AG04450 (cell line): ENCODE measurements at regions of chr2 and their contacts with region 1.

Region 1: DNA sequence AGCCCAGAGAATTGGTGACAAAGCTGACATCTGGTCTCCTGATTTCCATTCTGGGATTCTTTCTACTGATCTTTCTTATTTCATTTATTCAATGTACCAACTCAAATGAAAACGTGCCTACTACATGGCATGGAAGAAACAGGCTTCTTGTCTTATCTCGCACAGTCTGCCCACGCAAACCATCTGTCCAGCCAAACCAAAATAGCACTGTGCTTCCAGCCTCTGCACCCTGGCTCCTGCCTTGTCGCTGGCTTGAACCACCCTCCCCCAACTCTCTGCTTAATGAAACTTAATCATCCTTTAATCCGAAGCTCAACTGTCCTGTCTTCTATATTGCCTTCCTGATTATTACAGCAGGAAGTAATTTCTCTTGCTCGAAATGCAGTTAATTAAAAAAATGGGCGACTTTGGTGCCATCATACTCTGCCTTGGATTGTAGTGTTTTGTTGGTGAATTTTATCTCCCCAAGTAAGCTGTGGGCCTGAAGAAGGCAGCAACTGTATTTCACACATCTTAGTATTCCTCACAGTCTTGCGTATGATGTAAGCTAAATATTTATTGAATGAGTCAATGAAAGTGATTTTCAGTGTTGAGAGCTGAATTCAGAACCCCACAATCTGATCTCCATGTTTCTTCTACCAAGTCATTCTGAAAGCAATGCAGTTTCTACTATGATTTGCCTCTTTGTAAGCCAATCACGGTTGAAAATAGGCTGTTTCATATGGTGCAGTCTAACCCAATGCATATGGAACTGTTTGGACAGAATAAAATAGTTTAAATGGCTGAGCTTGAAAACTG is 190.8 kb downstream of the TMEM247 start:
- DNase-seq: no peak
- H3K4me3 ChIP-seq: no peak overlapping the region
- H3K27ac ChIP-seq: no peak overlapping the region
- H3K27me3 ChIP-seq: no peaks in the 10 kb centered on the region
- CTCF ChIP-seq: no peak

Region 2: DNA sequence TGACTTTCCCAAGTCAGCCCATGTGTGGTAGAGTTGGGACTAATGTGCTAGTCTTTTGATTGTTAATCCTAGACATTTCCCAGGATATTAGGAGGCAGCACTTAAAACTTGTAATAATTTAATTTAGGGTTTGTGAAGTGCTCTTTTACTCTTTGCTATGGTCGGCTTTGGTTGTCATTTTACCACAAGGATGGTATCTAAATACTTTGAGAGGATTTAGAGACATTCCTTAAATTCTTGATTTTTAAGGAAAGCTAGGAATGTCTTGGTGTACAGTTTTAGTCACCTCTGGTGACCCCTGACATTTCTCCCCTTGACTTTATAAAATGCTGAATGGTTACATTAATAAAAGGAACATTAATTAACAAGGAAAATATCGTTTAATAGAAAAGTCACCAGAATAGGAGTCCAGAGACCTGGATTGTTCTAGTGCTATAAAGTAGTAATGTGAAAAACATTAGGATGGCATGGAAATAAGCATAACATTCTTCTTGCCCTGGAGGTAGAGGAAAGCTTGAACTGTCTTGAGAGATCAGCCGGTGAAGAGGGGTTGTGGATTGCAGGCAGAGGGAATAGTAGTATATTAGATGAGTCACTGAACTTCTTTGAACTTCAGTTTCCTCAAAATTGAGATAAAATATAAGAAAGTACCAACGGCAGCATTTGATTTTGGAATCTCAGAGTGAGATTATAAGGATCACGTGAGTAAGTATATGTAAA is 36.2 kb after region 1 on chr2:
- CTCF ChIA-PET with region 1: no interaction called
- POLR2A ChIA-PET with region 1: no interaction called
- DNase-seq: no peak
- H3K4me3 ChIP-seq: no peak overlapping the region
- H3K27ac ChIP-seq: no peak overlapping the region
- H3K27me3 ChIP-seq: no peaks in the 10 kb centered on the region
- CTCF ChIP-seq: no peak

Region 3: DNA sequence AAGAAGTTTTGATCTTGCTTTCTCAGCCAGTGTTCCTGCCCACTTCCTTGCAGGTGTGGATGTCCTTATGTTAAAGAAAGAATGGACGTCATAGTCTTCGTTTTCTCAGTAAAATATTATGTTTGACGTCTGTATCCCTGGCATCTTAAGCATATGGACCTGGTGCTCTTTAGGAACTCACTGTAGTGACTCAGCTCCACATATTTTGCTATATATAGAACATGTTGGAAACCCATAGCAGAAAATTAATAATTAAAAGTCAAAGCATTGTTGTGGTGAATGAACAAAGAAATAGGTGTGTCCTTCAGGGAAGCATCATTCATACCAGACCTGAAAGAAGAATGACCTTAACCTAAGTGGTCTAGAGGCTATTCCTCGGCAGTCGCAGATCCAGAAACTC is 49.3 kb after region 1 on chr2:
- CTCF ChIA-PET with region 1: interaction called, 16 read pairs
- POLR2A ChIA-PET with region 1: no interaction called
- DNase-seq: peak; percentile 34
- H3K4me3 ChIP-seq: no peak overlapping the region
- H3K27ac ChIP-seq: peak overlapping the region; percentile 53
- H3K27me3 ChIP-seq: no peaks in the 10 kb centered on the region
- CTCF ChIP-seq: no peak